Psoas muscle (tissue), 8 donors: ENCODE measurements at regions of chr10 and their contacts with region 1.

Region 1: DNA sequence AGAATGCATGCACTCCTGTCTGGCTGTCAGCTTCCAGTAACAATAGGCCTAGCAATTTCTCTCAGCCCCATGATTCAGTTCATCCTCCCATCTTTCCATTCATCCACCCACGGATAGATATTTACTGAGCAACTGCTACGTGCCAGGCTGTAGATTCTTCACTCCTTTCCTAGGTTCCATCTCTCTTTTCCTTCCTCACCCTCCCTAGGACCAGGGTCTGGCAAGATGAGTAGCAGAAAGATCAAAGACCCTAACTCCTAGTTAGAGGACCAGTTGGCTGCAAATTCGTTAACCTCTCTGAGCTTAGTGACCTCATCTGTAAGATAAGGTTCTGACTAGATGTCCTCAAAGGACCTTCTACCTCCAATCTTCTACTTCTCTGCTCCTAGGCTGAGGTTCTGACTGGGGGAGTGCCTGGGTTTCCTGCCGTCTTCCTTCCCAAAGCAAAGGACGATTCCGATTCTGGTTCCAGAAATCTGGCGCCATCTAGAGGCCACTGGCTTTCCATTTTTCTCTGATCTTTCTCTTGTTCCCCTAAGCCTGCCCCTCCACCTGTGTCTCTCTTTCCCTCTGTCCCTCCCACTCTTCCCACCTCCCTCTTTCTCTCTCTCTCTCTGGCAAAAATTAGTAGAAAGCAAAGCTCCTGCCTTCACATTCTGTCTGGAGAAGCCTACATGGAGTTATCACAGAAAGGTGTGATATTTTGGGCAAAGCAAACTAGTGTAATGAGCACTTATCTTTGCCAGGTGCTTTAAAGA is 26.2 kb downstream of the TBATA start:
- DNase-seq: peak; percentile 37 to 77
- ATAC-seq: peak; percentile 61 to 91 (median 74)
- H3K4me3 ChIP-seq: no peak overlapping the region
- H3K27ac ChIP-seq: no peak overlapping the region
- H3K4me1 ChIP-seq: no peaks in the 10 kb centered on the region
- H3K27me3 ChIP-seq: no peaks in the 10 kb centered on the region
- CTCF ChIP-seq: peak; percentile 72

Region 2: DNA sequence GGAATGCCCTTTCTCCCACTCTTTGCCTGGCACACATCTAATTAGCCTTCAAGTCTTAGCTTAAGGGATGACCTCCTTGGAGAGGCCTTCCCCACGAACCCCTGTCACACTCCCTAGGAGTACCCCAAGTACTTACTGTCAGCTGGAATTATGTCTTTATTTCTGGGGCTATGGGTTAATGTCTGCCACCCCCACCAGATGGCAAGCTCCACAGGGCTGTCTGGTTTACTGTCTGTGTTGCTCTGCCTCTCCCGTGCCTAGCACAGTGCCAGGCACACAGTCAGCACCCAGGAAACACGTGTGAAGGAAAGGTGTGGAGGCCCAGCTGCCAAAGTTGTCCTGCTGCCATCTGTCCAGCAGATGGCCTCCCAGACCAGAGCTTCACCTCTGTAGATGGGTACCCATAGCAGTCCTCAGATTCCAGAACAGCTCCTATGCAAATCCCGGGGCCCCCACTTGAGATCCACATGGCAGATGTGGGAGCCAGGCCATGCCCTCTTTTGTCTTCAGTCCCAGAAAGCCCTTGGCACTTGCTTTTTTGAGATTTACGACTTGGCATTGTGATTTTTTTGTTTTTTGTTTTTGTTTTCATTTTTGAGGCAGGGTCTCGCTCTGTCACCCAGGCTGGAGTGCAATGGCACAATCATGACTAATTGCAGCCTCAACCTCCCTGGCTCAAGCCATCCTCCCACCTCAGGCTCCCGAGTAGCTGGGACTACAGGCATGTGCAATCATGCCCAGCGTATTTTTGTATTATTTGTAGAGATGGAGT is 297.5 kb before region 1 on chr10:
- intact Hi-C with region 1: loop called (anchors 1 to 5 kb)
- DNase-seq: peak; percentile 49 to 77
- ATAC-seq: peak; percentile 65 to 74 (median 69)
- H3K4me3 ChIP-seq: no peak overlapping the region
- H3K27ac ChIP-seq: no peak overlapping the region
- H3K4me1 ChIP-seq: no peaks in the 10 kb centered on the region
- H3K27me3 ChIP-seq: no peaks in the 10 kb centered on the region
- CTCF ChIP-seq: peak; percentile 90

Region 3: GRCh38 chr10:70549962-70550458 is 208.9 kb before region 1 on chr10:
- intact Hi-C with region 1: loop called (anchors 1 to 2 kb)
- DNase-seq: peak; percentile 55 to 72
- ATAC-seq: peak; percentile 80 to 93 (median 82)
- H3K4me3 ChIP-seq: no peak overlapping the region
- H3K27ac ChIP-seq: no peak overlapping the region
- H3K4me1 ChIP-seq: no peaks in the 10 kb centered on the region
- H3K27me3 ChIP-seq: no peaks in the 10 kb centered on the region
- CTCF ChIP-seq: peak; percentile 94

Region 4: GRCh38 chr10:70558871-70559810 is 199.8 kb before region 1 on chr10:
- intact Hi-C with region 1: loop called in 1 of 2 experiments (anchors 2 kb)
- DNase-seq: peak in 1 of 2 donors; percentile 63
- ATAC-seq: peak in 3 of 4 donors; percentile 62 to 78 (median 76)
- H3K4me3 ChIP-seq: no peak overlapping the region
- H3K27ac ChIP-seq: no peak overlapping the region
- H3K4me1 ChIP-seq: peaks cover 10% of the 10 kb centered on the region
- H3K27me3 ChIP-seq: no peaks in the 10 kb centered on the region
- CTCF ChIP-seq: peak; percentile 44

Region 5: DNA sequence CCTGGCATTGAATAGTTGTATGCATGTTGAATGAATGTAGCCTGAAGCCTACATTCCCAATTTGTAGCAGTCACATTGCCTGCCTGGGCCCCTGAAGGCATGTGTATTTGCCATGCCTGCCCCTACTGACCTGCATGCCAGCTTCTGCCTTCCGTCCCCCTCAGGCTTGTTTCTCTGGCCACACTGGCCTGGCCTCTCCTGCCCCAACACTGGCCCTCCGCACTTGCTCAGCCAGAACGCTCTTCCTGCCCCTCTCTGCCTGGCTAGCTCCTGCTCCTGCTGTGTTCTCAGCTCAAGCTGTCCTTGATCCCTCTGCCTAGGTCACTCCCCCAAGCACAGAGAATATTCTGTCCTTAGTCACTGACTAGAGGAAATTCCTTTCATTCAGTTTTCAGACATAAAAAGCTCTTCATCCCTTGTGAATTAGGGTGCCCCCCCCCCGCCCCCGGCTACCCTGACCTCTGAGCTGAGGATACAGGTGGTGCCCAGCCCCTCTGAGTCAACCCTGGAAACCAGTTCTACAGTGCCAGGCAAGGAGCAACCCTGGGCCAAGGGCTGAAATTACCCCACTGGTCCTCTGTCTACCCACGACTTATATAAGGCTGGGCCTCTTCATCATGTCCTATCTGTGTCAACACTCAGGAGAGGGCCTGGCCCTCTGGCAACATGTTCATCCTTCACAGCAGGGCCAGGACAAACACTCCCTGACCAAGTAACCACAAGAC is 50.1 kb after region 1 on chr10:
- intact Hi-C with region 1: no loop called
- DNase-seq: no peak
- ATAC-seq: no peak
- H3K4me3 ChIP-seq: no peak overlapping the region
- H3K27ac ChIP-seq: no peak overlapping the region
- H3K4me1 ChIP-seq: no peaks in the 10 kb centered on the region
- H3K27me3 ChIP-seq: no peaks in the 10 kb centered on the region
- CTCF ChIP-seq: no peak